HCT116 (cell line): ENCODE measurements at regions of chr2 and their contacts with region 1.

Region 1: DNA sequence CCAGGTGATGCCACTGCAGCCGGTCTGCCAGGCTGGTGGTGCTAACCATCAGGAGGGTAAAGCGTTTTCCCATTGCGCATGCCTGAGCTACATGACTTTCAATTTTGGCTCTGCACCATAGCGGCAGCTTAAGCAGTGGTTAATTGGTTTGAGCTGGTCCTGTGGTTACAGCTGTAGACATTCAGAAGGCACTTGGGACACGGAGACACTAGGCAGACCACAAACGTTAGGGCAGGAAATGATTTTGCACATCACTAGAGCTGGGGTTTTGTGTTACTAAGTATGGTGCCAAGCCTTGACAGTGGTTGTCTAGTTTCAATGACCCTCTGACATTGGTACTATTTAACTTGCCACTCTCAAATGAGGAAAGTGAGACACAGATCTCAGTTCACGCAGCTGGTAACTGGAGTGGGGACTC is 28.9 kb upstream of the CNOT11 start:
- DNase-seq: no peak
- ATAC-seq: no peak
- H3K4me3 ChIP-seq: no peak overlapping the region
- H3K27ac ChIP-seq: no peak overlapping the region
- H3K4me1 ChIP-seq: no peaks in the 10 kb centered on the region
- H3K27me3 ChIP-seq: no peaks in the 10 kb centered on the region
- CTCF ChIP-seq: no peak
- POLR2A ChIP-seq: no peak
- RAD21 ChIP-seq: no peak

Region 2: GRCh38 chr2:101205521-101205998 is 18.3 kb before region 1 on chr2:
- CTCF ChIA-PET with region 1: interaction called, 14 read pairs
- POLR2A ChIA-PET with region 1: no interaction called
- RAD21 ChIA-PET with region 1: no interaction called
- intact Hi-C with region 1: no loop called
- DNase-seq: peak; percentile 91
- ATAC-seq: peak; percentile 97
- H3K4me3 ChIP-seq: peak overlapping the region; percentile 8 to 29
- H3K27ac ChIP-seq: peak overlapping the region; percentile 27; the same call in 1 of the 2 replicates
- H3K4me1 ChIP-seq: peaks cover 3 to 7% of the 10 kb centered on the region in 2 experiments; a peak in 2 of 4 replicates
- H3K27me3 ChIP-seq: no peaks in the 10 kb centered on the region
- CTCF ChIP-seq: peak; percentile 46 to 79 (median 64)
- POLR2A ChIP-seq: no peak
- RAD21 ChIP-seq: peak; percentile 87

Region 3: DNA sequence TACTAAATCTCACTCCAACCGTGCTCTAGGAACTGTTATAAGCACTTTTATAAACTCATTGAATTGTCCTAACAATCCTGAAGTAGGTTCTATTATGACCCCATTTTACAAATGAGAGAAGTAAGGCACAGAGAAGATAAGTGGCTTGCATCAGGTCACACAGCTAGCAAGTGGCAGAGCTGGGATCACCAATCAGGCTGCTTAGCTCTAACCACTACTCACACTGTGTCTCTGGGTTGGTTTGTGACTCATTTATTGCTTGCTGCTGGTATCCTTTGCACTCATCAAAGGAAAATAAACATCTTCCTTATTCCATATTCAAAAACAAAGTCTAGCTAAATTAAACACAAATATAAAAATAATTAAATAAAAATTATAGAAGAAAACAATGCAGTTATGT is 725.5 kb after region 1 on chr2:
- CTCF ChIA-PET with region 1: no interaction called
- POLR2A ChIA-PET with region 1: no interaction called
- RAD21 ChIA-PET with region 1: no interaction called
- intact Hi-C with region 1: no loop called
- DNase-seq: no peak
- ATAC-seq: no peak
- H3K4me3 ChIP-seq: no peak overlapping the region
- H3K27ac ChIP-seq: no peak overlapping the region
- H3K4me1 ChIP-seq: no peaks in the 10 kb centered on the region; a peak in 1 of 4 replicates
- H3K27me3 ChIP-seq: no peaks in the 10 kb centered on the region
- CTCF ChIP-seq: no peak
- POLR2A ChIP-seq: no peak
- RAD21 ChIP-seq: no peak

Region 4: DNA sequence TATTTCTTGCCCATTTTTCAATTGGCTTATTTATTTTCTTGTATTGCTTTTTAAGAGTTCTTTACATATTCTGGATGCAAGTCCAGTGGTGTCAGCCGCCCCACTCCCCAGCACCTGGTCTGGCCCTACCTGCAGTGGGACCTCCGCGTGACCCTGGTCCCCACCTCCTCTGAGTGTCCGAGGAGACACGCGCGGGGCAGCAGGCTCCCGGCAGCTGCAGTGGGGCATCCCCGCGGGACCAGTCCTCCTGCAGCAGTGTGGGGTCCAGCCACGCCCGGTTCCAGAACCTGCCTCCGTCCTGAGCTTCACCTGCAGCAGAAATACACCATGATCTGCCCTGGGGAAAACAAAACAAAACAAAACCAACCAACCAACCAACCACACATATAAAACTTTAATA is 869.8 kb after region 1 on chr2:
- CTCF ChIA-PET with region 1: no interaction called
- POLR2A ChIA-PET with region 1: no interaction called
- RAD21 ChIA-PET with region 1: no interaction called
- intact Hi-C with region 1: no loop called
- DNase-seq: no peak
- ATAC-seq: no peak
- H3K4me3 ChIP-seq: no peak overlapping the region
- H3K27ac ChIP-seq: no peak overlapping the region
- H3K4me1 ChIP-seq: peaks cover 0 to 7% of the 10 kb centered on the region in 2 experiments; a peak in 2 of 4 replicates
- H3K27me3 ChIP-seq: no peaks in the 10 kb centered on the region
- CTCF ChIP-seq: no peak
- POLR2A ChIP-seq: no peak
- RAD21 ChIP-seq: no peak